HepG2 (cell line): ENCODE measurements at regions of chr4 and their contacts with region 1.

Region 1: DNA sequence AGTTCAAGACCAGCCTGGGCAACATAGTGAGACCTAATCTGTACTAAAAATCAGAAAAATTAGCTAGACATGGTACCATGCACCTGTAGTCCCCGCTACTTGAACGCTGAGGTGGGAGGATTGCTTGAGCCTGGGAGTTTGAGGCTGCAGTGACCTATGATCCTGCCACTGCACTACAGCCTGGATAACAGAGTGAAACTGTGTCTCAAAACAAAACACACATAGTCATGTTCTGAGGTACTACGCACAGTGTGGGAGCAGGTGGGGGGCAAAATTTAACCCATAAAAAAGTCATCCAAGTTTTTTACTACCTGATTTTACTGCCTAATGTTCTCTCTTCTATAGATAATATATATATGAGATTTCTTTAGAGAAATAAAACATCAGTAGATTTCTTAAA is 28.4 kb downstream of the HSPA4L start:
- DNase-seq: no peak
- ATAC-seq: peak; percentile 66
- H3K4me3 ChIP-seq: no peak overlapping the region
- H3K27ac ChIP-seq: no peak overlapping the region
- H3K4me1 ChIP-seq: peaks cover 13% of the 10 kb centered on the region
- H3K27me3 ChIP-seq: no peaks in the 10 kb centered on the region
- CTCF ChIP-seq: no peak
- EP300 ChIP-seq: no peak
- POLR2A ChIP-seq: no peak
- RAD21 ChIP-seq: no peak

Region 2: GRCh38 chr4:127575888-127576287 is 234.7 kb before region 1 on chr4:
- CTCF ChIA-PET with region 1: no interaction called
- POLR2A ChIA-PET with region 1: no interaction called
- in situ Hi-C with region 1: no loop called
- intact Hi-C with region 1: no loop called
- DNase-seq: no peak
- ATAC-seq: no peak
- H3K4me3 ChIP-seq: no peak overlapping the region
- H3K27ac ChIP-seq: no peak overlapping the region
- H3K4me1 ChIP-seq: no peaks in the 10 kb centered on the region
- H3K27me3 ChIP-seq: peaks cover 0 to 11% of the 10 kb centered on the region in 2 experiments; a peak in 3 of 5 replicates
- CTCF ChIP-seq: no peak
- EP300 ChIP-seq: no peak
- POLR2A ChIP-seq: no peak
- RAD21 ChIP-seq: no peak

Region 3: GRCh38 chr4:127936974-127937373 is 126.4 kb after region 1 on chr4:
- CTCF ChIA-PET with region 1: no interaction called
- POLR2A ChIA-PET with region 1: no interaction called
- in situ Hi-C with region 1: no loop called
- intact Hi-C with region 1: no loop called
- DNase-seq: no peak
- ATAC-seq: no peak
- H3K4me3 ChIP-seq: no peak overlapping the region
- H3K27ac ChIP-seq: no peak overlapping the region
- H3K4me1 ChIP-seq: peaks cover 3% of the 10 kb centered on the region
- H3K27me3 ChIP-seq: no peaks in the 10 kb centered on the region
- CTCF ChIP-seq: no peak
- EP300 ChIP-seq: no peak
- POLR2A ChIP-seq: no peak
- RAD21 ChIP-seq: no peak

Region 4: DNA sequence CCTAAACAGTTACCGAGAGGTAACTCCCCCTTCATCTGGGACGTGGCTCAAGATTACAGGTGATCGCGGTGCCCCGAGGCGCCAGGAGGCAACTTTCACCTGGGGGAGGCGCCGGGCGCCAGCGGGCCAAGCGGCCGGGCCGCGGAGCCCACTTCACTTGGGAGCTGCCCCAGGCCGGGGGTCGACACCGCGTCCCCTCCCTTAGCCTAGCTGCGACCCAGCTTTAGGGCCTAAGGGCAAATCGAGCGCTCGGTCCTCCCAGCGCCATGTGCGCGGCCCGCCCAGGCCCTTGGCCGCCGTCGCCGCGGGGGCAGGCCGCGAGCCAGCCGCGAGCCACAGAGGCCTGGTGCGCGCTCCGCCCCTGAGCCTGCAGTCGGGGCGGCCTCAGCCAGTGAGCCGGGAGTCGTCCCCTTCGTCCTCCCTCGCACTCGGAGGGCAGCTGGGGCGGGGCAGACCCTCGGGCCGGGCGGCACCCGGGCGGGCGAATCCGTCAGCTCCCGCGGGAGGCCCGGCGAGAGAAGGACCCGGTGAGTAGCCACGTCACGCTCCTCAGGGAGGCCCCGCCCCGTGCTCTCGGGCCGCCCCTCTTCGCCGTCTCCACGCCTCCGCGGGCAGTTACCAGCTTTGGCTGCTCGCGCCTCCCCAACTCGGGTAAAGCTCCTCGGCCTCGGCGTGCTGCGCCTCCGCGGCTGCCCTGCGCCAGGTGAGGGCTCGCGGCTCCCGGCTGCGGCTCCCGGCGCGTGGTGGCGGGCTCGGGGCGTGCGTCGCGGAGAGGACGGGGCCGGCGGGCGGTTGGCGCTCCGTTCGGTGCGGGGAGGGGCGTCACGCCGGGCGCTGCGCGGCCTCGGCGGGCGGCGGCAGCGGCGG is 250.4 kb after region 1 on chr4 and contains the start of gene LARP1B:
- CTCF ChIA-PET with region 1: no interaction called
- POLR2A ChIA-PET with region 1: no interaction called
- in situ Hi-C with region 1: no loop called
- intact Hi-C with region 1: loop called (anchors 10 kb)
- DNase-seq: peak; percentile 91
- ATAC-seq: peak; percentile 92
- H3K4me3 ChIP-seq: peak within 1 kb of the TSS; percentile 71 to 94 (median 91)
- H3K27ac ChIP-seq: peak within 1 kb of the TSS; percentile 99
- H3K4me1 ChIP-seq: peaks cover 40% of the 10 kb centered on the region
- H3K27me3 ChIP-seq: no peaks in the 10 kb centered on the region
- CTCF ChIP-seq: peak; percentile 16; the same call in 1 of the 2 replicates
- EP300 ChIP-seq: no peak
- POLR2A ChIP-seq: peak; percentile 92 to 94
- RAD21 ChIP-seq: peak; percentile 77; the same call in 1 of the 2 replicates
- total RNA-seq, gene LARP1B: 52.7 and 57.1 TPM in 2 replicates